A673 (cell line): ENCODE measurements at regions of chr13 and their contacts with region 1.

Region 1: GRCh38 chr13:92677571-92677970 is 549.0 kb upstream of the GPC6 start:
- DNase-seq: peak; percentile 15
- H3K4me3 ChIP-seq: no peak overlapping the region
- H3K27ac ChIP-seq: no peak overlapping the region
- H3K4me1 ChIP-seq: no peaks in the 10 kb centered on the region
- H3K27me3 ChIP-seq: no peaks in the 10 kb centered on the region
- CTCF ChIP-seq: no peak

Region 2: GRCh38 chr13:91072486-91072885 is 1605.1 kb before region 1 on chr13:
- CTCF ChIA-PET with region 1: no interaction called
- POLR2A ChIA-PET with region 1: interaction called, 10 read pairs
- intact Hi-C with region 1: no loop called
- DNase-seq: no peak
- H3K4me3 ChIP-seq: no peak overlapping the region
- H3K27ac ChIP-seq: no peak overlapping the region
- H3K4me1 ChIP-seq: no peaks in the 10 kb centered on the region
- H3K27me3 ChIP-seq: peaks cover 80% of the 10 kb centered on the region
- CTCF ChIP-seq: no peak

Region 3: GRCh38 chr13:92390217-92390616 is 287.4 kb before region 1 on chr13:
- CTCF ChIA-PET with region 1: no interaction called
- POLR2A ChIA-PET with region 1: no interaction called
- intact Hi-C with region 1: no loop called
- DNase-seq: no peak
- H3K4me3 ChIP-seq: no peak overlapping the region
- H3K27ac ChIP-seq: no peak overlapping the region
- H3K4me1 ChIP-seq: no peaks in the 10 kb centered on the region
- H3K27me3 ChIP-seq: peaks cover 29% of the 10 kb centered on the region
- CTCF ChIP-seq: no peak

Region 4: GRCh38 chr13:92460479-92460878 is 217.1 kb before region 1 on chr13:
- CTCF ChIA-PET with region 1: no interaction called
- POLR2A ChIA-PET with region 1: no interaction called
- intact Hi-C with region 1: no loop called
- DNase-seq: no peak
- H3K4me3 ChIP-seq: no peak overlapping the region
- H3K27ac ChIP-seq: no peak overlapping the region
- H3K4me1 ChIP-seq: no peaks in the 10 kb centered on the region
- H3K27me3 ChIP-seq: no peaks in the 10 kb centered on the region
- CTCF ChIP-seq: no peak

Region 5: DNA sequence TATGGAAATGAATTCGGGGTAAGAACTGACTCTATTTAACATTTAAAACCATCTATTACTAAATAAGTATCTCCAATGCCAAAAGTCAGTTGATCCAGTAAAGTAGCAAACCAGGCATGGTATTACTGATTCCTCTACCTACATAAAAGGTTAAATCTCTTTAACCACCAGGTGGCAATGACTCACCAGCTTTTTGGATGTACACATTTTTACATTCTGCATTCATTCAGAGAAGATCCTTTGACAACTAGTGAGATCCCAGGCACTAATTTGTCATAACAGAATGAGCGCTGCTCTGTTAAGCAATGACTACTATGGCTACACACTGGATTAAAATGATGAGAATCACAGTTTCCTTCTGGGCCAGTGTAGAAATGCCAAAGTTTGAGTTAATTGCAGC is 219.3 kb after region 1 on chr13:
- CTCF ChIA-PET with region 1: no interaction called
- POLR2A ChIA-PET with region 1: no interaction called
- intact Hi-C with region 1: no loop called
- DNase-seq: peak; percentile 55
- H3K4me3 ChIP-seq: no peak overlapping the region
- H3K27ac ChIP-seq: no peak overlapping the region
- H3K4me1 ChIP-seq: no peaks in the 10 kb centered on the region
- H3K27me3 ChIP-seq: no peaks in the 10 kb centered on the region
- CTCF ChIP-seq: peak; percentile 29; the same call in 1 of the 2 replicates

Region 6: GRCh38 chr13:92994056-92994455 is 316.5 kb after region 1 on chr13:
- CTCF ChIA-PET with region 1: no interaction called
- POLR2A ChIA-PET with region 1: no interaction called
- intact Hi-C with region 1: no loop called
- DNase-seq: no peak
- H3K4me3 ChIP-seq: no peak overlapping the region
- H3K27ac ChIP-seq: no peak overlapping the region
- H3K4me1 ChIP-seq: no peaks in the 10 kb centered on the region
- H3K27me3 ChIP-seq: no peaks in the 10 kb centered on the region
- CTCF ChIP-seq: no peak